Heart right ventricle (tissue), 16 donors: ENCODE measurements at regions of chr16 and their contacts with region 1.

Region 1: GRCh38 chr16:54266363-54266955 is 20.1 kb downstream of the IRX3 start:
- DNase-seq: no peak
- ATAC-seq: peak in 5 of 8 donors; percentile 29 to 62 (median 44)
- H3K4me3 ChIP-seq: no peak overlapping the region
- H3K27ac ChIP-seq: peak overlapping the region; percentile 42 to 81 (median 60)
- H3K4me1 ChIP-seq: peaks cover 0 to 28% (median 12%) of the 10 kb centered on the region in 9 donors
- H3K27me3 ChIP-seq: no peaks in the 10 kb centered on the region
- CTCF ChIP-seq: no peak

Region 2: GRCh38 chr16:54208237-54208636 is 58.2 kb before region 1 on chr16:
- intact Hi-C with region 1: loop called in 1 of 10 experiments (anchors 10 kb)
- DNase-seq: no peak
- ATAC-seq: peak in 3 of 8 donors; percentile 43 to 67 (median 49)
- H3K4me3 ChIP-seq: no peak overlapping the region
- H3K27ac ChIP-seq: no peak overlapping the region
- H3K4me1 ChIP-seq: peaks cover 0 to 6% (median 0%) of the 10 kb centered on the region in 9 donors
- H3K27me3 ChIP-seq: peaks cover 0 to 3% (median 0%) of the 10 kb centered on the region in 7 donors
- CTCF ChIP-seq: no peak

Region 3: DNA sequence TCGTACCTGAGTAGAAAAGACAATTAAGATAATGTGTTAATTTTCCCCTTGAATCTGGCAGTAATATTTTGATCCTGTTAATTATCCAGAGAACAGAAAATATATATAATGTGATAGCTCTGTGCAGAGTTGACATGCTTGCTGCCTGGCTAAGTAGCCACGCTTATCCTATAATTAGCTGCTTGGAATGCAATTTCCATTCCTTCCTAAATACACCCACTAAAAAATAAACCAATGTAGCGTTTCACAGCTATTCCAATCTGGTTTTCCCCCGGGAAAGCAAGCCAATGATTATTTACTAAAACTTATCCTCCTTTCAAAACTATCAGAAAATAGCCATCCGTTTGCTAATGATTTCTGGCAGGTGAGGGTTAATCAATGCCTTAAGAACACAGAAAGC is 529.8 kb after region 1 on chr16:
- intact Hi-C with region 1: no loop called
- DNase-seq: no peak
- ATAC-seq: no peak
- H3K4me3 ChIP-seq: no peak overlapping the region
- H3K27ac ChIP-seq: no peak overlapping the region
- H3K4me1 ChIP-seq: peaks cover 0 to 4% (median 0%) of the 10 kb centered on the region in 9 donors
- H3K27me3 ChIP-seq: no peaks in the 10 kb centered on the region
- CTCF ChIP-seq: no peak